Activated CD8-positive, alpha-beta T cell treated with anti-CD3 and anti-CD28 coated beads, Interleukin-2, amount 10 ng/mL, durations not matched to agents 7 days and 5 days (primary cell): ENCODE measurements at regions of chr1 and their contacts with region 1.

Region 1: GRCh38 chr1:161292631-161293030 is 17.1 kb downstream of the MPZ start:
- DNase-seq: no peak
- ATAC-seq: no peak
- H3K4me3 Mint-ChIP-seq: no peak overlapping the region
- H3K27ac Mint-ChIP-seq: no peak overlapping the region
- H3K4me1 Mint-ChIP-seq: peaks cover 3% of the 10 kb centered on the region
- H3K27me3 Mint-ChIP-seq: no peaks in the 10 kb centered on the region

Region 2: DNA sequence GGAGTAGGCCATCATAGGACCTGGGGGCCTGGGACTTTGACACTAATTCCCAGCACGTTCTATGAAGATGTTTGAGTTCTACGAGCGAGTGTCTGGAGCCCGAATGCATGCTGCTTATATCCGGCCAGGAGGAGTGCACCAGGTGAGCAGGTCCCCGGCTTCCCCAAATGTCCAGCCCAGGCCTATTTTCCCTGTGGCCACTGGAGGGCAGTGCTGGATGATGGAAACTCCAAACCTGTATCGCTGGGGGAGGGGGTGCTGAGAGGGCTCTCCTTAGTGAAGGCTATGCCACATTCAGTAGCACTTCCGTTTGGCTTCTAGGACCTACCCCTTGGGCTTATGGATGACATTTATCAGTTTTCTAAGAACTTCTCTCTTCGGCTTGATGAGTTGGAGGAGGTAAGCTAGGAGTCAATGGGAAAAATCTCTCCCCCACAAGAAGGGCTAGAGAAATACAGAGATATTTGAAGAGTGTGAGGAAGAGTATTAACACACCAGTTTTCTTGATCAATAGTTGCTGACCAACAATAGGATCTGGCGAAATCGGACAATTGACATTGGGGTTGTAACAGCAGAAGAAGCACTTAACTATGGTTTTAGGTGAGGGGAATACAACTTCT is 82.7 kb before region 1 on chr1:
- CTCF ChIA-PET with region 1: interaction called, 10 read pairs
- POLR2A ChIA-PET with region 1: no interaction called
- DNase-seq: peak; percentile 84
- ATAC-seq: peak; percentile 89
- H3K4me3 Mint-ChIP-seq: no peak overlapping the region
- H3K27ac Mint-ChIP-seq: peak overlapping the region; percentile 57
- H3K4me1 Mint-ChIP-seq: peaks cover 48% of the 10 kb centered on the region
- H3K27me3 Mint-ChIP-seq: no peaks in the 10 kb centered on the region

Region 3: GRCh38 chr1:161244888-161245287 is 47.7 kb before region 1 on chr1:
- CTCF ChIA-PET with region 1: interaction called, 10 read pairs
- POLR2A ChIA-PET with region 1: no interaction called
- DNase-seq: no peak
- ATAC-seq: no peak
- H3K4me3 Mint-ChIP-seq: no peak overlapping the region
- H3K27ac Mint-ChIP-seq: no peak overlapping the region
- H3K4me1 Mint-ChIP-seq: no peaks in the 10 kb centered on the region
- H3K27me3 Mint-ChIP-seq: peaks cover 12% of the 10 kb centered on the region

Region 4: DNA sequence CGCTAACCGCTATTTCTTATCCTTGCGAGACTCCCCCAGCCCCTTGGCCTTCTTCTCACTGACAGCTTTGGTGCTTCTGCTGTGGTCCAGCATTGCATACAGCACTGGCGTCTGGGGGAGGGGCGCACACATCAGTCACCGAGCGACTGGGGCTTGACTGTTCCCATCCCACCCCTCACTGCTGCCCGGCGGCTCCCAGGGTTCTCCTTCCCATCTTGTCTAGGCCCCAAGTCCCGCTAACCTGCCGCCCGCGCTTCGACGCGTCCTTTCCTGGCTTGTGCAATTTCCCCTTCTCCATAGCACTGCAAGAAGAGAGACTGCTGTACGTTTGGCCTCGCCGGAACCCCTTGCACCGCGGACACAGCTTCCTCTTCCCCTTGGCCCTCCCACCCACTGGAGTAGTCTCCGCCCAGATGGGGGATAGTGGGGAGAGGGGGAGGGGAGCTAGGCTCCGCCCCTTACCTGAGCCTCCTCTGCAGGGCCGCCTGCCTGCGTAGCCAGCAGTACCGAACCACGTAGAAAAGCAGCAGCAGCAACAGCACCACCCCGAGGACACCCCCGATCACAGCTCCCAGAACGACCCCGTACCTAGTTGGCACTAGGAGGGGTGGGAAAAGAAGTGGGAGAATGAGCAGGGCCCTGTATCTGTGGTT is 13.4 kb after region 1 on chr1:
- CTCF ChIA-PET with region 1: interaction called, 16 read pairs
- POLR2A ChIA-PET with region 1: no interaction called
- DNase-seq: peak; percentile 91
- ATAC-seq: peak; percentile 94
- H3K4me3 Mint-ChIP-seq: peak overlapping the region; percentile 91
- H3K27ac Mint-ChIP-seq: peak overlapping the region; percentile 85
- H3K4me1 Mint-ChIP-seq: peaks cover 37% of the 10 kb centered on the region
- H3K27me3 Mint-ChIP-seq: peaks cover 7% of the 10 kb centered on the region